Right lobe of liver (tissue), 6 donors: ENCODE measurements at regions of chr15 and their contacts with region 1.

Region 1: GRCh38 chr15:74302821-74303359 is 64.6 kb downstream of the CYP11A1 start:
- DNase-seq: peak in 1 of 3 donors; percentile 38
- ATAC-seq: peak; percentile 35 to 61 (median 52)
- H3K4me3 ChIP-seq: no peak overlapping the region
- H3K27ac ChIP-seq: no peak overlapping the region
- H3K4me1 ChIP-seq: no peaks in the 10 kb centered on the region
- H3K27me3 ChIP-seq: no peaks in the 10 kb centered on the region
- CTCF ChIP-seq: peak; percentile 43 to 59 (median 54)
- POLR2A ChIP-seq: no peak

Region 2: DNA sequence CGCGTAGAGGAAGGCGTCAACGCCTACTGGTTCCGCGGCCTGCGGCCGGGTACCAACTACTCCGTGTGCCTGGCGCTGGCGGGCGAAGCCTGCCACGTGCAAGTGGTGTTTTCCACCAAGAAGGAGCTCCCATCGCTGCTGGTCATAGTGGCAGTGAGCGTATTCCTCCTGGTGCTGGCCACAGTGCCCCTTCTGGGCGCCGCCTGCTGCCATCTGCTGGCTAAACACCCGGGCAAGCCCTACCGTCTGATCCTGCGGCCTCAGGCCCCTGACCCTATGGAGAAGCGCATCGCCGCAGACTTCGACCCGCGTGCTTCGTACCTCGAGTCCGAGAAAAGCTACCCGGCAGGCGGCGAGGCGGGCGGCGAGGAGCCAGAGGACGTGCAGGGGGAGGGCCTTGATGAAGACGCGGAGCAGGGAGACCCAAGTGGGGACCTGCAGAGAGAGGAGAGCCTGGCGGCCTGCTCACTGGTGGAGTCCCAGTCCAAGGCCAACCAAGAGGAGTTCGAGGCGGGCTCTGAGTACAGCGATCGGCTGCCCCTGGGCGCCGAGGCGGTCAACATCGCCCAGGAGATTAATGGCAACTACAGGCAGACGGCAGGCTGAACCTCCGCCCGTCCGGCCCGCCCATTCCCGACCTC is 168.4 kb before region 1 on chr15:
- intact Hi-C with region 1: loop called (anchors 5 kb)
- DNase-seq: peak; percentile 76 to 80 (median 79)
- ATAC-seq: peak; percentile 84 to 91 (median 88)
- H3K4me3 ChIP-seq: no peak overlapping the region
- H3K27ac ChIP-seq: no peak overlapping the region
- H3K4me1 ChIP-seq: peaks cover 0 to 24% (median 0%) of the 10 kb centered on the region in 4 donors
- H3K27me3 ChIP-seq: peaks cover 18 to 46% of the 10 kb centered on the region in 2 donors
- CTCF ChIP-seq: peak; percentile 59 to 71 (median 69)
- POLR2A ChIP-seq: no peak